Ovary (tissue), 10 donors: ENCODE measurements at regions of chr6 and their contacts with region 1.

Region 1: DNA sequence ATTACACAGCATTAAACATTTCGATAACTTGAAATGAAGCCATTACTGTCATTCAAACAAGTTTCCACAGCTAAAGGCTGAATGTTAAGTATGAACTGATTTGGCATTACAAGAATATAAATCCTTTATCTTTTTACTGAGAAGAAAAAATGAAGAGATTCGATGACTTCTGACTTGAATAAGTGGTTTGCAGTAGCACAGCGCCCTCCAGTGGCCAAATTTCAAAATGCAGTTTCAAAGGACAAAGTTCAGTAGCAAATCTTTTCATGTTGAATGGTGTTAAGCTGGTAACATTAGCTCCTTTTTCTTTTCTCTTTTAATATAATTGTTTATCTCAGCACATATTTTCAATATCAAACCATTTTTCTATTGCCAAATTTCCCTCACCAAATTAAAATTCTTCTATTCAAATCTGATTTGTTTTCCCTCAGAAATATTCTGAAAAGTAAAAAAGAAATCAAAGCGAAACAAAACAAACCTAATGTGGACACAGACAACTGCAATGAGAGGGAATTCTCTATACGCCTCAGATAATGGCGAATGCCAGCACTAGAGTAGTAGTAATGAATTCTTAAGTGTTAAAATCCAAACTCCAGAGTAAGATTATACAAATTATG is 145.7 kb downstream of the BTBD9 start:
- DNase-seq: peak; percentile 56 to 84 (median 73)
- H3K4me3 ChIP-seq: no peak overlapping the region
- H3K27ac ChIP-seq: no peak overlapping the region
- H3K4me1 ChIP-seq: peaks cover 3% of the 10 kb centered on the region
- H3K27me3 ChIP-seq: no peaks in the 10 kb centered on the region
- CTCF ChIP-seq: peak; percentile 80 to 93 (median 89)
- EP300 ChIP-seq: no peak
- POLR2A ChIP-seq: no peak

Region 2: DNA sequence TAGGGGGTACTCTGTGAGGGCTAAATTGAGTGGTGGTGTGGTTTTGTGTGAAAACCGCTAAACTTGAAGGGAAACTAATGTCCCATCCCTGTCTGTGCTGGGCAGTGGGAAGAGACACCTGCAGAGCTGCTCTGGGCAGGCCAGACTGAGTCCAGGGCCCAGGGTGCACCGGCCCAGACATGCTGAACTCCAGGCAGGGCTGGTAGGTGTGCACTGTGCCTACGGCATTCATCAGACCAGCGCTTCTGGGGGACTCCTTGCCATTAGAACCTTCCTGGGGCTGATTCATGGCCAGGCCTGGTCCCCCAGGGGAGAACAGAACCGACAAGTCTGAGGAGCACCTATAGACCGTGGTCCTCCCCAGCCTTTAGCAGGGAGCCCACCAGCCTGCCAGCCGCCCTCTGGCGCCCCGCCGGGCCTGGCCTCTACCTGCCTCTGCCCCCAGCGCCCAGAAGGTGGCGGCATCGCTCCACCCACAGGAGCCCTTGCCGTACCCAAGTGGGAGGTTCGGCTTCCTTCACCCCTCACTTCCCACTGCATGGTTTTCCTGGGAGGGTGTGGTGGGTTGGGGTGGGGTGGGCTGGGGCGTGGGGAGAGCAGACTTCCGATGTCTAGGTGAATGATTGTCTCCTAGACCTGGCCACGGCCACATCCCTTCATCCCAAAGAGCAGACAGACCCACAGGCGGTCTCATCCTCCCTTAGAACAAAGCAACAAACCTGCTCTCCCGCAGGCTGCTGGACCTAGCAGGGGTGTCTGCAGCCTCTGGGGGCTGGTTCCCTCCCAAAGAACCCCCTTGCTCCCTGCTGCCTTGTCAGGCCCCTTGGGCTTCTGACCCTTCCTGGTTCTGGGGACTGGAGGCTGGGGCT is 1009.9 kb before region 1 on chr6:
- intact Hi-C with region 1: loop called in 1 of 4 experiments (anchors 10 kb)
- DNase-seq: peak; percentile 48 to 80 (median 70)
- H3K4me3 ChIP-seq: no peak overlapping the region
- H3K27ac ChIP-seq: no peak overlapping the region
- H3K4me1 ChIP-seq: no peaks in the 10 kb centered on the region
- H3K27me3 ChIP-seq: no peaks in the 10 kb centered on the region
- CTCF ChIP-seq: peak; percentile 34 to 54 (median 52)
- EP300 ChIP-seq: no peak
- POLR2A ChIP-seq: no peak

Region 3: GRCh38 chr6:37783856-37784584 is 710.0 kb before region 1 on chr6:
- intact Hi-C with region 1: loop called in 1 of 4 experiments (anchors 2 kb)
- DNase-seq: peak; percentile 25 to 60 (median 50)
- H3K4me3 ChIP-seq: peak overlapping the region; percentile 30
- H3K27ac ChIP-seq: peak overlapping the region in 1 of 2 donors; percentile 69
- H3K4me1 ChIP-seq: peaks cover 9% of the 10 kb centered on the region
- H3K27me3 ChIP-seq: no peaks in the 10 kb centered on the region
- CTCF ChIP-seq: no peak
- EP300 ChIP-seq: no peak
- POLR2A ChIP-seq: no peak

Region 4: DNA sequence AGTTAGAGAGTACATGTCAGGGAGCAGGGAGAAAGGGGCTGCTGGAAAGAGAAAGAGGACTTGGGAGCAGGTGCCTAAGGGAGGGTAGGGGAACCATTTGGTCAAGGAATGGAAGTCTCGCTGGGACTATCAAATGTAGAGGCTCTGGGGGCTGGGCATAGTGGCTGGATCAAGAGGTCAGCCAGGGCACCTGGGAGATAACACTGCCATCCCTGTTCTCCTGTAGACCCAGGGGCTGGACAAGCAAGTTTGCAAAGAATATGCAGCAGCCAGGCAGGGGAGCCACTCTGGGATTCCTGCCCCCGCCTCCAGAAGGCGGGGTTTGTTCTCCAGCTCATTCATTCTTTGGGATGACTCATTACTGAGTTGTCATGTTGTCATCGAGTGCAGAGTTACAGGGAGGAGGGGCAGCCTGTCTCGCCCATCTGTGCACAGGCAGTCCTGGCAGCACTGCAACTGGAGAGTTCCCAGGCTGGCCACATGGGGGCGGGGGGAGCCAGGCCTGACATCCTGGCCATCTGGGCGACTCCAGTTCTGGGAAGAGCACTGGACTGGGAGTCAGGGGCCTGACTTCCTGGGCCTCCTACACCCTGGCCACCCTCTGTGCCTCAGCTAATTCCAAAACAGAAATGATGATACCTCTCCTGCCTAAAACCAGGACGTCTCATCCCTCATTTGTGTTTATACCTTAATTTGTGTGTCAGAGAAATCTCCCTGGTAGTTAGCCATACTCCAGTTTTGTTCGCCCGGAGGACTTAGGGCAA is 702.7 kb before region 1 on chr6:
- intact Hi-C with region 1: loop called in 1 of 4 experiments (anchors 10 kb)
- DNase-seq: peak; percentile 83 to 89 (median 84)
- H3K4me3 ChIP-seq: no peak overlapping the region
- H3K27ac ChIP-seq: no peak overlapping the region
- H3K4me1 ChIP-seq: peaks cover 6% of the 10 kb centered on the region
- H3K27me3 ChIP-seq: no peaks in the 10 kb centered on the region
- CTCF ChIP-seq: peak; percentile 79 to 85 (median 82)
- EP300 ChIP-seq: no peak
- POLR2A ChIP-seq: no peak

Region 5: GRCh38 chr6:38034274-38034914 is 459.6 kb before region 1 on chr6:
- intact Hi-C with region 1: loop called in 1 of 4 experiments (anchors 10 kb)
- DNase-seq: no peak
- H3K4me3 ChIP-seq: no peak overlapping the region
- H3K27ac ChIP-seq: no peak overlapping the region
- H3K4me1 ChIP-seq: no peaks in the 10 kb centered on the region
- H3K27me3 ChIP-seq: no peaks in the 10 kb centered on the region
- CTCF ChIP-seq: peak in 1 of 3 donors; percentile 19
- EP300 ChIP-seq: no peak
- POLR2A ChIP-seq: no peak

Region 6: DNA sequence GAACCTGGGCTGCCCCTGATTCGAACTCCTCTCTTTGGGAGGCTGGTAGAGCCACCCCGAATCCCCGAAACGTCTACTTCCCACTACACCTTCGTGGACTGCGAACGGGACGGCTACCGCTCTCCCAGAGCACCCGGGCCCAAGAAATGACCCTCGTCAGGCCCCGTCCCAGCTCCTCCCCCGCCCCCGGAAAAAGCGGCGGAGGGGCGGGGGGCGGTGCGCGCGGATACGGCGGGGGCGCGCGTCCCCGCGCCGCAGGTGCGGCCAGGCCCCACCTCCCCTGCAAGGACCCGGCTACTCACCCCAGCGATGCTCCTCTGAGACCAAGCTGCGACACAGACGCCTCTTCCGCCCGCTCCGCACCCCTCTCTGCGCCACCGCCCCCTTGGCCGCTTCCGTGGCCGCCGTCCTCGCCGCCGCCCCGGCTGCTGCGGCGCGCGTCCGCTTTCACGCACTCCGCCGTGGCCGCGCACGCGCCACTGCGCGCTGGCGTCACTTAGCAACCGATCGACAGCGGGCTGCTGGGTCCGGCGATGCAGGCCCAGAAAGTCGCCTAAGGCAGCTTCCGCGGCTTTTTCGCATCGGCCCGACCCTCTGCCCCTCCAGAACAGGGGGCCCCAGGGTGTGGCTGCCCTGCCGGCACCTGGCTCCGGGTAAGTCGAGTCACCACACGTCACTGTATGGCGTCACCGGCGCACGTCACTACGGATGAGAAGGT is 145.6 kb after region 1 on chr6 and contains the start of gene BTBD9:
- intact Hi-C with region 1: no loop called
- DNase-seq: peak; percentile 80 to 91 (median 86)
- H3K4me3 ChIP-seq: peak within 1 kb of the TSS; percentile 88
- H3K27ac ChIP-seq: peak within 1 kb of the TSS; percentile 74 to 94
- H3K4me1 ChIP-seq: peaks cover 5% of the 10 kb centered on the region
- H3K27me3 ChIP-seq: no peaks in the 10 kb centered on the region
- CTCF ChIP-seq: no peak
- EP300 ChIP-seq: no peak
- POLR2A ChIP-seq: peak; percentile 55
- total RNA-seq, gene BTBD9: 13.9 to 28.8 (median 23.8) TPM

Region 7: GRCh38 chr6:38660313-38660712 is 166.3 kb after region 1 on chr6:
- intact Hi-C with region 1: loop called in 1 of 4 experiments (anchors 10 kb)
- DNase-seq: no peak
- H3K4me3 ChIP-seq: no peak overlapping the region
- H3K27ac ChIP-seq: no peak overlapping the region
- H3K4me1 ChIP-seq: no peaks in the 10 kb centered on the region
- H3K27me3 ChIP-seq: no peaks in the 10 kb centered on the region
- CTCF ChIP-seq: no peak
- EP300 ChIP-seq: no peak
- POLR2A ChIP-seq: no peak

Region 8: DNA sequence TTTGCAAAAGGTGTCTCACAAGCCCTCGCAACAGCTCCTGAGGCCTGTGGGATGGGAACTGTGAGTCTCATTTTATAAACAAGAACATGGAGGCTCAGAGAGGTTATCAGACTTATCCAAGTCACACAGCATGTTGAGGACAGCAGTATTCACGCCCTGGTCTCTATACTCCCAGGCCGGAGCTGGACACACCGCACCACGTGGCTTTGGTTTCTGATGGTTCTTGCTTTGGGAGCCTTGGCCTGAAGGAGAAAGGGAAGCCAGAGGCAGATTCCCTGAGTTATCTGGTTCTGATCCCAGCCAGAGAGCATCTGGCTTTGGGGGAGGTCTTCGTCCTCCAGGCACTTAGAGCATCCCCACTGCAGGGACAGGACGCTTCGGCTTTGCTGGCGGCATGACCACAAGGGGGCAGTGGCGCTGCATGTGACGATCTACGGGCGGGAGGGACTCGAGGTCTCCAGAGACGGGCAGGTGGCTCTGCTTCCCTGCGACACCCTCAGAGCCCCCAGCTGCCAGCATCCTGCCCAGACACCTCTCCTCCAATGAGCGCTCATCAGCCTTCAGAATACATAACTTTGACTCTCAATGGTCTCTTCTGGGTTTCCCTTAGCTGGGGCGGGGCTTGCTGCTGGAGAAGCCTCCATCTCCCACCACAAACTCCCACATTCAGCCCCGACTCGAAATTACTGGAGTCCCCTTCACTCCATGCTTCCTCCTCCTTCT is 672.3 kb after region 1 on chr6:
- intact Hi-C with region 1: no loop called
- DNase-seq: peak; percentile 68 to 86 (median 81)
- H3K4me3 ChIP-seq: no peak overlapping the region
- H3K27ac ChIP-seq: no peak overlapping the region
- H3K4me1 ChIP-seq: no peaks in the 10 kb centered on the region
- H3K27me3 ChIP-seq: no peaks in the 10 kb centered on the region
- CTCF ChIP-seq: peak; percentile 59 to 90 (median 77)
- EP300 ChIP-seq: no peak
- POLR2A ChIP-seq: no peak